Activated CD4-positive, alpha-beta T cell treated with anti-CD3 and anti-CD28 coated beads, Interleukin-2, amount 10 ng/mL, durations not matched to agents 7 days and 5 days (primary cell): ENCODE measurements at regions of chr16 and their contacts with region 1.

Region 1: GRCh38 chr16:75385507-75386152 is 47.7 kb downstream of the CFDP1 start:
- DNase-seq: peak; percentile 22
- H3K4me3 Mint-ChIP-seq: no peak overlapping the region
- H3K27ac Mint-ChIP-seq: no peak overlapping the region
- H3K4me1 Mint-ChIP-seq: peaks cover 13% of the 10 kb centered on the region
- H3K27me3 Mint-ChIP-seq: peaks cover 18% of the 10 kb centered on the region

Region 2: DNA sequence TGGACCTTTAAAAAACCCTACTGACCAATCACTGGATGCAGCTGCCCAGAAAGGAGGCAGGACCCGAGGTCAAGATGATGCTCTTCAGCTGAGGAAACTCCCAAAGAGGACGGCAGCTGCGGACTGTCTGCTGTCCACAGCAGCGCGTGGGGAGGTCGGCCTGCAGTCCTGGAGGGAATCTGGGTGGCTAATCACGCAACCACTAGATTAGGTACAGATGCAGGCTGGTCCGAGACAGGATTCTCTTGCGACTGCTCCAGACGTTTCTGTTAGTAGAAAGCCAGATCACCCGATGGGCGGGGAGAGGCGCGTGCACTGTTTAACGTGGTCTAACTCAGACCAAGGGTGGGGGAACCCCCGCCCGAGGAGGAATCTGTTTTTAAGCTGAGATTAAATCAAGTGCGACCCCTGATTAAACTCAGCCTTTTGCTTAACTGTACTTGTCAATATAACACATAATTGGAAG is 187.5 kb before region 1 on chr16:
- CTCF ChIA-PET with region 1: interaction called, 11 read pairs
- POLR2A ChIA-PET with region 1: no interaction called
- DNase-seq: no peak
- H3K4me3 Mint-ChIP-seq: no peak overlapping the region
- H3K27ac Mint-ChIP-seq: no peak overlapping the region
- H3K4me1 Mint-ChIP-seq: peaks cover 15% of the 10 kb centered on the region
- H3K27me3 Mint-ChIP-seq: peaks cover 23% of the 10 kb centered on the region

Region 3: DNA sequence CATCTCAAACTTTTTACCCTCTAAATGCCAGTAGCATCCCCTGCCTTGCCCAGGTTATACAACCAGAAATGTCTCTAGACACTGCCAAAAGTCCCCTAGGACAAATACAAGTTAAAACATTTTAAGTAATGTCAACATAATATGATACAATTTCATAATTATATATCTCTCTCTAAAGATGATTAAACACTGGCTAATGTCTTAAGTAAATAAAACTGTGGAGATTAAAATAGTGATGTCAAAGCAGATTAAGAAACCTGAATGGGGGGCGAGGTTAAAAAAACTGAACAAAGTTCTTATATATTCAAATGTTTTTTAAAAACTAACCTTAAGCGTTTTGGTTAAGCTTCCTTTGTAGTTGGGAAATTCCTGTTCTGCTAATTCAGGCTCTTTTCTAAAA is 14.4 kb before region 1 on chr16:
- CTCF ChIA-PET with region 1: no interaction called
- POLR2A ChIA-PET with region 1: no interaction called
- DNase-seq: no peak
- H3K4me3 Mint-ChIP-seq: no peak overlapping the region
- H3K27ac Mint-ChIP-seq: no peak overlapping the region
- H3K4me1 Mint-ChIP-seq: no peaks in the 10 kb centered on the region
- H3K27me3 Mint-ChIP-seq: no peaks in the 10 kb centered on the region

Region 4: GRCh38 chr16:75541236-75541635 is 155.6 kb after region 1 on chr16:
- CTCF ChIA-PET with region 1: no interaction called
- POLR2A ChIA-PET with region 1: no interaction called
- DNase-seq: no peak
- H3K4me3 Mint-ChIP-seq: no peak overlapping the region
- H3K27ac Mint-ChIP-seq: peak overlapping the region; percentile 31
- H3K4me1 Mint-ChIP-seq: peaks cover 3% of the 10 kb centered on the region
- H3K27me3 Mint-ChIP-seq: no peaks in the 10 kb centered on the region